ENCODE measurements at regions of chr7 and their contacts with region 1.

Region 1: DNA sequence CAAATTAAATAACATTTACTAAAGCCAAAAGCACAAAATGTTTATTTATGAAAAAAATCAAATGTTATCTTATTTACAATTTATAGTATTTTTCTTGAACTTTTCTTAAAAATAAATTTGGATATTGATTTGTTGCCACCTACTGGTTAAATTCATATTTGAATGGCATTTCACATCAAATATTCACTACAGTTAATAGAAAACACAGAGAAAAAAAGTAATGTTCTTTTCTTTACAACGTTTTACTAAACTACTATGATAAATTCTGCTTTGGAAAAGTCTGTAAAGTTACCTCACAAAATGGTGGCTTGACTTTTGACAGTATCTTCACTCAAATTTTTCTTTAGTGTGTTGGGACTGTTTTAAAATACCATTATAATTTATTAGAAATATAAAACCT is 52.7 kb downstream of the SRPK2 start:
- DNase-seq: no peak
- CTCF ChIP-seq: peak; percentile 8

Region 2: DNA sequence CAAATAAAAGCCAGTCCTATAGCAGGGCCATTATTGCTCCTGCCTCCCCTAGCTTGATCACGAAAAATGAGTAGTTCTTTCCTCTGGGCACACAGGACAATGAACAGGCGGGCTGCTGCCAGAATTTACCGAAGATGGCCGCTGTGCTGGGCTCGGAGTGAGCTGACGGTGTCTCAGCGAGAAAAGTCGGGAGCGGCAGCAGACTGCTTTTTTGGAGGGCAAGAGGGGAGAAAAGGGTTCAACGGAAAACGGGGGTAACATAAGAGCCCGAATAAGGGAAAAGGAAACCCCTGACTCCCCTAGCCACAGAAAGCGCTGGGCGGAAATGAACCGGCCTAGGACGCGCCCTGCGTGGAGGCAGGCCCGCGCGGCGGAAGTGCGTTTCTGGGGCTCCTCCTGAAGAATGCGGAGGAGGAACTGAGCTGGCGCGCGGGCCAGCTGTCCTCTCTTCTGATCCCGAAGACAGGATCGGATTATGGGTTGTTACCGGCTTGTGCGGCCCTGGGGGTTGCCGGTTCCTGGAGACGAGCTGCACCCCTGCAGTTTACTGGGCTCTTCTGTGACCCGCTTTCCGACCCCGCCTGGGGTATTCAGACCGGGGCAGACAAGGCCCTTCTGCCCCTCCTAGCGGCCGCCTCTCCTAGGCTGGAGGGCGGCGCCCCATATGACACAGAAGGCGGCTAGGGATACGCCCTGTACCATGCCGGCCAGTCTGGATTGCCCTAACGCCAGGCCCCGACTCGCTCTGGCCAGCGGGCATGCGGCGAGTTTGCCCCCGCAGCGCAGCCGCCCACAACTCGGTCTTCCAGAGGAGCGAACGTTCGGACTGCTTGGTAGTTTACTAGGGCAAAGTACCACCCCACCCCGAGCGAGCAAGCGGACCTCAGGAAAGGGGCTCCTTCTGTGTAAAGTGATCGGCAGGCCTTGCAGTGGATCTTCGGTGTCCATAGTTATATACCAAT is 352.1 kb before region 1 on chr7:
- in situ Hi-C with region 1: loop called (anchors 25 kb)
- DNase-seq: peak; percentile 87
- CTCF ChIP-seq: peak; percentile 51

Region 3: DNA sequence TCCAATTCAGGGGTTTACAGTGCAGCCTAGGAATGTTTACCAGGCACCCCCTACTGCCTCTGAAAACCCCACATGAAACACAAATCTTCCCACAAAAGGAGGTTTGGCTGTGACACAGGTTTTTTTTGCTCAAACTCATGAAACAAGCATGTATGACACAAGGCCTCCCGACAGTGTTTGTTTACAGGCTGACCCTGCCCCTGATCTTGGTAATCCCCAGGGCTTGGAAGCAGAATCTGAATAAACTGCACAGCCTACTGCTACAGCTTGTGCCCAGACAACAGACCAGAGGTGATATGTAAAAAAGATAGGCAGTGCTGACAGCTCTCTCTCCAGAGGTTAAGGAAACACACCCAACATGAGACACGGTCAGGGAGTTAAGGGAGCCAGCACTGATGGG is 137.8 kb before region 1 on chr7:
- in situ Hi-C with region 1: no loop called
- DNase-seq: no peak
- CTCF ChIP-seq: no peak

Region 4: GRCh38 chr7:105473163-105473562 is 137.2 kb after region 1 on chr7:
- in situ Hi-C with region 1: no loop called
- DNase-seq: no peak
- CTCF ChIP-seq: no peak

Measured in GM13976 (cell line).